KBM-7 (cell line): ENCODE measurements at regions of chrX and their contacts with region 1.

Region 1: GRCh38 chrX:103941201-103941975 is 21.0 kb upstream of the TMSB15B start:
- DNase-seq: peak; percentile 26

Region 2: GRCh38 chrX:104039689-104040505 is 98.5 kb after region 1 on chrX and contains the start of gene H2BW2:
- in situ Hi-C with region 1: loop called (anchors 25 kb)
- DNase-seq: no peak

Region 3: DNA sequence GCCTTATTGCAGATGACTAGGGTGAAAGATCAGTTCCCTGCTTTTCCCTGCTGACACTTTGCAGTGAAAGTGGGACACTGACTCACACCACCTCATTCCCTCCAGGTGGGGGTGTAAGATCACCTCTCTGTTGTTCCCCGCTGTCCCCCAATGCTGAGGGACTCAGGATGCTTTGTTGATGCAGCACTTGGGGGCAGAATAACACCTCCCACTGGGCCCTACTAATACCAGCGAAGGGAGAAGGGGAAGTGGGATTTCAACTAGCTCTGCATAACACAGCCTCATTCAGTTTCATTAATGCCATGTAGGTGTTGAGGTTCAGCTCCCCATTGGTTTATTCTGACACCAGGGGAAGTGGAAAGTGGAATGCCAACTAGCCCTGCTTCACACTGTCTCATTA is 581.0 kb after region 1 on chrX:
- in situ Hi-C with region 1: no loop called
- DNase-seq: no peak